Heart left ventricle (tissue), 16 donors: ENCODE measurements at regions of chr1 and their contacts with region 1.

Region 1: GRCh38 chr1:180912801-180913565 is at the start of gene KIAA1614:
- DNase-seq: peak; percentile 49 to 75 (median 54)
- ATAC-seq: peak; percentile 16 to 83 (median 73)
- H3K4me3 ChIP-seq: peak within 1 kb of the TSS; percentile 52 to 88 (median 70)
- H3K27ac ChIP-seq: peak within 1 kb of the TSS; percentile 82 to 94 (median 88)
- H3K4me1 ChIP-seq: peaks cover 0 to 32% (median 15%) of the 10 kb centered on the region in 12 donors
- H3K27me3 ChIP-seq: peaks cover 0 to 18% (median 0%) of the 10 kb centered on the region in 9 donors
- CTCF ChIP-seq: no peak
- POLR2A ChIP-seq: no peak
- total RNA-seq, gene KIAA1614: 4.3 to 12.1 (median 6.5) TPM

Region 2: GRCh38 chr1:180926164-180926981 is 13.4 kb after region 1 on chr1:
- intact Hi-C with region 1: loop called in 1 of 10 experiments (anchors 1 kb)
- DNase-seq: peak; percentile 71 to 88 (median 76)
- ATAC-seq: peak; percentile 48 to 75 (median 66)
- H3K4me3 ChIP-seq: peak overlapping the region in 4 of 12 donors; percentile 3 to 31 (median 6)
- H3K27ac ChIP-seq: peak overlapping the region; percentile 7 to 90 (median 82)
- H3K4me1 ChIP-seq: peaks cover 11 to 48% (median 33%) of the 10 kb centered on the region in 12 donors
- H3K27me3 ChIP-seq: no peaks in the 10 kb centered on the region
- CTCF ChIP-seq: no peak
- POLR2A ChIP-seq: no peak

Region 3: DNA sequence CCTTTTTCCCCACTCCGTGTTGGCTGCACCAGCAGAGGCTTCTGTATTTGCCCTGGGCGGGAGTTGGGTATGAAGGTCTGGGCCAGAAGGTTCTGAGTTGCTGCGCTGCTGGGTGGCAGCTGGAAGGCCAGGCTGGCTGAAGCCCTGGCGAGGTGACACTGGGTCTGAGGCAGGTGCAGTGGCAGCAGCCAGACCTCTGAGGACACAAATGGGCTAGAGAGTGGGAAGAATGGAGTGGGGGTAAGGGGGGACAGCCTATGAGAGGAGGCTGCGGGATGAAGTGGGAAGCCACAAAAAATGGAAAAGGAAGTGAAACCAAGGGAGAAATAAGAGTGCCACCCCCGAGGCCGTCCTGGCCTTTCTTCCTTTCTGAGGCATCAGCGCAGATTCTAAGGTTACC is 56.5 kb after region 1 on chr1:
- intact Hi-C with region 1: loop called in 1 of 10 experiments (anchors 5 kb)
- DNase-seq: no peak
- ATAC-seq: no peak
- H3K4me3 ChIP-seq: no peak overlapping the region
- H3K27ac ChIP-seq: no peak overlapping the region
- H3K4me1 ChIP-seq: peaks cover 0 to 27% (median 9%) of the 10 kb centered on the region in 12 donors
- H3K27me3 ChIP-seq: no peaks in the 10 kb centered on the region
- CTCF ChIP-seq: no peak
- POLR2A ChIP-seq: no peak